ENCODE measurements at regions of chr21 and their contacts with region 1.

Region 1: DNA sequence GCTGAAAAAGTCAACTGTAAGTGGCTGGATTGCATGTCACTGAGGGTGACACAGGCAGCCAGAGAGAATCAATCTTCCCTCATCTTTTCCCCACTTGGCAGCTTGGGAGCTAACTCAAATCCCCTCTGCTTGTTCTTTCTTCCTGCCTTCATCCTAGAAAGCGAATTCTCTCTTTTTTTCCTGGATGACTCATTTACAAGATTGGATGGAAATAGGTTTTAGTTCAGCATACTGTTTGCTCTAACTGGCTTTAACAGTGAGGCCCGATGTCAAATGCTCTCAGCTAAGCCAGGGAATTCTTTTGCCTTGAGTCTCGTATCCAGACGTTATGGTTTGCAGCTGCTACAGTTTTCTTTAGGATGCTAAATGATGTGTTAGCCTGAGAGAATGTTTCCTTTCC is 72.7 kb downstream of the HUNK start:
- DNase-seq: peak; percentile 97
- ATAC-seq: peak; percentile 94
- H3K4me3 ChIP-seq: no peak overlapping the region
- H3K27ac ChIP-seq: peak overlapping the region; percentile 39; the same call in 1 of the 2 replicates
- H3K4me1 ChIP-seq: peaks cover 14% of the 10 kb centered on the region
- H3K27me3 ChIP-seq: no peaks in the 10 kb centered on the region
- CTCF ChIP-seq: no peak
- POLR2A ChIP-seq: no peak
- RAD21 ChIP-seq: peak; percentile 17; the same call in 1 of the 2 replicates

Region 2: GRCh38 chr21:31873696-31874599 is 71.6 kb before region 1 on chr21:
- CTCF ChIA-PET with region 1: interaction called, 3 read pairs
- POLR2A ChIA-PET with region 1: no interaction called
- dilution Hi-C with region 1: no loop called
- in situ Hi-C with region 1: no loop called
- intact Hi-C with region 1: loop called (anchors 2 kb)
- DNase-seq: peak; percentile 33
- ATAC-seq: peak; percentile 53
- H3K4me3 ChIP-seq: peak overlapping the region; percentile 89
- H3K27ac ChIP-seq: peak overlapping the region; percentile 75
- H3K4me1 ChIP-seq: peaks cover 4% of the 10 kb centered on the region; the same call in 1 of the 2 replicates
- H3K27me3 ChIP-seq: peaks cover 10% of the 10 kb centered on the region
- CTCF ChIP-seq: peak; percentile 54
- POLR2A ChIP-seq: no peak
- RAD21 ChIP-seq: peak; percentile 36

Region 3: GRCh38 chr21:31894457-31894856 is 51.1 kb before region 1 on chr21:
- CTCF ChIA-PET with region 1: no interaction called
- POLR2A ChIA-PET with region 1: no interaction called
- dilution Hi-C with region 1: no loop called
- in situ Hi-C with region 1: no loop called
- intact Hi-C with region 1: loop called (anchors 5 kb)
- DNase-seq: no peak
- ATAC-seq: no peak
- H3K4me3 ChIP-seq: no peak overlapping the region
- H3K27ac ChIP-seq: no peak overlapping the region
- H3K4me1 ChIP-seq: peaks cover 25% of the 10 kb centered on the region
- H3K27me3 ChIP-seq: no peaks in the 10 kb centered on the region
- CTCF ChIP-seq: no peak
- POLR2A ChIP-seq: no peak
- RAD21 ChIP-seq: no peak

Region 4: GRCh38 chr21:31908106-31909031 is 37.2 kb before region 1 on chr21:
- CTCF ChIA-PET with region 1: no interaction called
- POLR2A ChIA-PET with region 1: no interaction called
- dilution Hi-C with region 1: no loop called
- in situ Hi-C with region 1: no loop called
- intact Hi-C with region 1: loop called (anchors 2 kb)
- DNase-seq: peak; percentile 84
- ATAC-seq: peak; percentile 71
- H3K4me3 ChIP-seq: no peak overlapping the region
- H3K27ac ChIP-seq: peak overlapping the region; percentile 70
- H3K4me1 ChIP-seq: peaks cover 36% of the 10 kb centered on the region
- H3K27me3 ChIP-seq: no peaks in the 10 kb centered on the region
- CTCF ChIP-seq: no peak
- POLR2A ChIP-seq: no peak
- RAD21 ChIP-seq: no peak

Measured in IMR-90 (cell line).